Left ventricle myocardium inferior (tissue), 1 donor: ENCODE measurements at regions of chr20 and their contacts with region 1.

Region 1: GRCh38 chr20:50115591-50116372 is 2.8 kb upstream of the UBE2V1 start:
- DNase-seq: peak; percentile 97
- H3K4me3 ChIP-seq: peak overlapping the region; percentile 65
- H3K27ac ChIP-seq: peak overlapping the region; percentile 99
- H3K4me1 ChIP-seq: peaks cover 57% of the 10 kb centered on the region
- H3K27me3 ChIP-seq: no peaks in the 10 kb centered on the region
- CTCF ChIP-seq: no peak

Region 2: DNA sequence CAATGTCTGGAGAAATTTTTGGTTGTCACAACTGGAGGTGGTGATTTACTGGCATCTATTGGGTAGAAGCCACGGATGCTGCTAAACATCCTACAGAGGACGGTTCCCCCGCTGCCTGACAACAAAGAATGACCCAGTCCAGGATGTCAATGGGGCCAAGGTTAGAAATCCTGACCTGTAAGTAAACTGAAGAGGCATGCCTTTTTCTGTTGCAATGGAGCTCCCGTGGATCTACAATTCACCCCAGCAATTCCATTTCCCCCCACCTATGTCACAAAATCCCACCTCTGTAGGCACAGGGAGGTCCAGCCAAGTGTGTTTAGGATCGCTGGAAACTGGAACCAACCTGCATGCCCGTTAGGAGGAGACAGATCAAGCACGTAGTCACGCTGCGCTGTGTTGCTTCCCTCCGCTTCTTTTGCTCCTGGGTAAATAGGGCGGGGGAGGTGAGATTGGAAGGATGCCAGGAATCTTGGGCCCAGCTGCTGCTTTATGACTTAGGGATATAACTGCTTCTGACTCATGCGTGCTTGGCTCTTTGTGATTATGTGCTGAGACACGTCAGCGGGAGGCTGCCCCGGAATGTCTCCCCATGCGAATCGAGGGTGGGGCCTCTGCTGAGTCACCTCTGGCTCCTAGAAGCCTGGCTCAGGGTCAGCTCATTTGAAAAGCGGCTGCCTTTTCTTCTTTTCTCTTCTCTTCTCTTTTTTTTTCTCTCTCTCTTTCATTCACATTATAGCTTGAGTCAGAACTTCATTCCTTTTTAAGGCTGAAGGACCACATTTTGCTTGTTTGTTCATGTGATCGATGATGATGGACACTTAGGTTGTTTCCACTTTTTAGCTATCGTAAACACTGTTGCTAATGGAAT is 50.1 kb after region 1 on chr20:
- intact Hi-C with region 1: loop called (anchors 5 kb)
- DNase-seq: peak; percentile 96
- H3K4me3 ChIP-seq: peak overlapping the region; percentile 62
- H3K27ac ChIP-seq: peak overlapping the region; percentile 97
- H3K4me1 ChIP-seq: peaks cover 40% of the 10 kb centered on the region
- H3K27me3 ChIP-seq: no peaks in the 10 kb centered on the region
- CTCF ChIP-seq: no peak